ENCODE measurements at regions of chr10 and their contacts with region 1.

Region 1: DNA sequence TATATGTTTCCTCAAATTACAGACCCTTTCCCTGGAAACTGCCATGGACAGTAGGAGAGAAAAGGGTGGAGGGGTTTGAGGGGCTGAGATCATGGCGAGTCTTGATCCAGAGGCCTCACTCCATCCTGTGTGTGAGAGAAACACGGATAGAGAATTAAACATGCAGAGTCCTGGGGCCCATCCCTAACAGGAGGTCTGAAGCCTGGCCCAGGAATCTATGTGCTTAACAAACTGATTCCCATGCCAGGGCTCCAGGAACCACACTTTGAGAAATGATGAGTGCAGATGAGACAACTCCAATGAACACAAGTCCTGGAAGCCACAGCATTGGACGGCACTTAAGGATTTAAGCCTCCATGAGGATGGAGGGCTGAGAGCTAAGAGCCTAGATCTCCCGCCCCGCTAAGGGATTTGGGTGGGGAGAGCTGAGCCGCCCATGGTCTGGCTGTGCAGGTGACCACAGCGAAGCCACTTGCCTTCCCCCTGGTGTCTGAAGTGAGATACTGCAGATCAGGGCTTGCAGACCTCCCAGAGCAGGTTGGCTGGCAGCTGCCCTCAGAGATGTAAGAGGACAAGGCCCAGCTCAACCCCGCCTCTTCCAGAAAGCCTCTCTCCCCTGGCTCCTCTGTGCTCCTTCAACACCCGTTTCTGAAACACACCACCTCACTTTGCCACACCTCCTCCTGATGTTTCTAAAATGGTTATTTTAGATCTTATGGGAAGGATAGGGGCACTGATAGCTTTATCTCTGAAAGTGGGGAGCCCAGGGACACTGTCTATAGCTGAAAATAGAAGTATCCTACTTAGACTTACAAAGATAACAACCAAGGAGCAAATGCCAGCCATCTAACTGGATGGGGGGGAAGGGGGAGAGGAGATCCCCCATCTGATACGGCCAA is 24.8 kb upstream of the EIF5AL1 start:
- DNase-seq: peak; percentile 80 to 83
- H3K4me3 ChIP-seq: no peak overlapping the region
- H3K27ac ChIP-seq: no peak overlapping the region
- H3K4me1 ChIP-seq: peaks cover 0 to 3% (median 0%) of the 10 kb centered on the region in 4 experiments; a peak in 1 of 7 replicates
- H3K27me3 ChIP-seq: peaks cover 0 to 4% (median 0%) of the 10 kb centered on the region in 4 experiments; a peak in 2 of 7 replicates
- CTCF ChIP-seq: peak; percentile 86 to 94 (median 90)
- EP300 ChIP-seq: no peak
- POLR2A ChIP-seq: no peak
- RAD21 ChIP-seq: peak; percentile 83 to 86

Region 2: GRCh38 chr10:79347226-79347893 is 140.2 kb before region 1 on chr10 and contains the start of gene PPIF:
- CTCF ChIA-PET with region 1: interaction called, 18 read pairs
- POLR2A ChIA-PET with region 1: no interaction called
- DNase-seq: peak; percentile 64 to 98
- H3K4me3 ChIP-seq: peak within 1 kb of the TSS; percentile 54 to 77 (median 58)
- H3K27ac ChIP-seq: peak within 1 kb of the TSS; percentile 43; the same call in 1 of the 2 replicates
- H3K4me1 ChIP-seq: peaks cover 0 to 14% (median 6%) of the 10 kb centered on the region in 4 experiments; a peak in 6 of 7 replicates
- H3K27me3 ChIP-seq: no peaks in the 10 kb centered on the region
- CTCF ChIP-seq: peak; percentile 76 to 90 (median 83)
- EP300 ChIP-seq: no peak
- POLR2A ChIP-seq: peak in 1 of 2 experiments; percentile 67; a peak in 1 of 3 replicates
- RAD21 ChIP-seq: peak; percentile 59 to 68
- total RNA-seq, gene PPIF: 70.2 and 74.9 TPM in 2 replicates

Region 3: GRCh38 chr10:79390551-79391209 is 96.9 kb before region 1 on chr10:
- CTCF ChIA-PET with region 1: interaction called, 100 read pairs
- POLR2A ChIA-PET with region 1: no interaction called
- DNase-seq: peak in 1 of 2 experiments; percentile 40
- H3K4me3 ChIP-seq: no peak overlapping the region
- H3K27ac ChIP-seq: no peak overlapping the region
- H3K4me1 ChIP-seq: peaks cover 0 to 1% (median 0%) of the 10 kb centered on the region in 4 experiments; a peak in 2 of 7 replicates
- H3K27me3 ChIP-seq: no peaks in the 10 kb centered on the region; a peak in 1 of 7 replicates
- CTCF ChIP-seq: 0 out of 4 replicates have a peak, but pooled peaks of 1 of the 3 experiments have one; percentile 6
- EP300 ChIP-seq: no peak
- POLR2A ChIP-seq: no peak
- RAD21 ChIP-seq: no peak

Region 4: GRCh38 chr10:79472951-79473350 is 14.6 kb before region 1 on chr10:
- CTCF ChIA-PET with region 1: interaction called, 101 read pairs
- POLR2A ChIA-PET with region 1: no interaction called
- DNase-seq: no peak
- H3K4me3 ChIP-seq: no peak overlapping the region
- H3K27ac ChIP-seq: no peak overlapping the region
- H3K4me1 ChIP-seq: peaks cover 0 to 4% (median 0%) of the 10 kb centered on the region in 4 experiments; a peak in 1 of 7 replicates
- H3K27me3 ChIP-seq: no peaks in the 10 kb centered on the region
- CTCF ChIP-seq: no peak
- EP300 ChIP-seq: no peak
- POLR2A ChIP-seq: no peak
- RAD21 ChIP-seq: no peak

Region 5: DNA sequence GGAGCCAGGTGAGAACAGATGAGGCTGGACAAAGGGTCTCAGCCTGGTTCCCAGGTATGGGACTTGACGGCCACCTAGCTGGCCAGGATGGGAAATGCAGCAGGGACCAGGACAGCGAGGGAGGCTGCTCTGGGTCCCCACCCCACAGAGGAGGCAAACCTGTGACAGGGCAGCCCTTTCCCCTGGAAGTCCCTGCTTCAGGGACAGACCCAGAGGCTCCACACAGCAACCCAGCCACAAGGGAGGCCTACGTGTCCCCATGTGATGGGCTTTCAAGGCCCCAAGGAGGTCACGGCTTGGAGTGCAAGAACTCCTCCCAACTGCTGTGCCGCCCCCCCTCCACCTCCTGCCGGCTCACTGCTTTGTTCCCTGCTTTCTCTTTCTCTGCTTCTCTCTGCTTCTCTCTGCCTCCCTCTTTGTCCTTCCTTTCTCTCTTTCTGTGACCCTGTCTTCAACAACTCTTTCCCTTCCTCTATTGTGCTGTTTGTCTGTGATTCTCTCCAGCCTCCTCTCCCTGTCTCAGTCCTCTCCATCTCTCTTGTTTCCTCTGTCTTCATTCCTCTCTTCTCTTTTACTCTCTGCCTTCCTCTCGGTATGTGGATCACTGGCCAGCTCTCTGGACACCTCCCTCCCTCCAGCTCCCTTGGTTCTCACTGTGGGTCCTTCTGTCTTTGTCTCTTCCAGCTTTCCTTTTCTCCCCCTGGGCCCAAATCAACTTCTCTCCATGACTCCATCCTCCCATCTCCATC is 15.2 kb after region 1 on chr10:
- CTCF ChIA-PET with region 1: interaction called, 23 read pairs
- POLR2A ChIA-PET with region 1: no interaction called
- DNase-seq: peak; percentile 29 to 78
- H3K4me3 ChIP-seq: no peak overlapping the region
- H3K27ac ChIP-seq: no peak overlapping the region
- H3K4me1 ChIP-seq: no peaks in the 10 kb centered on the region
- H3K27me3 ChIP-seq: no peaks in the 10 kb centered on the region; a peak in 3 of 7 replicates
- CTCF ChIP-seq: peak; percentile 66 to 75 (median 71)
- EP300 ChIP-seq: no peak
- POLR2A ChIP-seq: no peak
- RAD21 ChIP-seq: peak; percentile 72 to 74

Region 6: DNA sequence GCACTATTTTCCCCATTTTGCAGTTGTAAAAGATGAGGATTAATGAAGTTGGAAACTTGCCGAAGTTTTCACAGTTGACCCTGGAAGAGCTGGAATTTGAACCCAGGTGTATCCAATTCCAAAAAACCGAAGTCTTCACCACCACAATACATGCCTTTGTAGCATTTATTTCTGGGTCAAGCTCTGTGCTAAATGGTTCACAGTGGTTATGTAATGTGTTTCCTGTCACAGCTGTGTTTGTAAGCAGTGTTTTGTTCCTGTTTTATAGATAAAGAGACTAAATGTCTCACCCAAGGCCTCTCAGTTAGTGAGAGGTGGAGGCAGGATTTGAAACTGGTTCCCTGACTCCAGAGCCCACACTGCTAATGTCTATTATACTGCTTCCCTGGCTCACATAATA is 55.1 kb after region 1 on chr10:
- CTCF ChIA-PET with region 1: no interaction called
- POLR2A ChIA-PET with region 1: no interaction called
- DNase-seq: no peak
- H3K4me3 ChIP-seq: no peak overlapping the region
- H3K27ac ChIP-seq: no peak overlapping the region
- H3K4me1 ChIP-seq: no peaks in the 10 kb centered on the region
- H3K27me3 ChIP-seq: no peaks in the 10 kb centered on the region
- CTCF ChIP-seq: no peak
- EP300 ChIP-seq: no peak
- POLR2A ChIP-seq: no peak
- RAD21 ChIP-seq: no peak

Measured in H1 (cell line).